Activated CD4-positive, alpha-beta T cell treated with anti-CD3 and anti-CD28 coated beads for 36 hours (primary cell): ENCODE measurements at regions of chr3 and their contacts with region 1.

Region 1: DNA sequence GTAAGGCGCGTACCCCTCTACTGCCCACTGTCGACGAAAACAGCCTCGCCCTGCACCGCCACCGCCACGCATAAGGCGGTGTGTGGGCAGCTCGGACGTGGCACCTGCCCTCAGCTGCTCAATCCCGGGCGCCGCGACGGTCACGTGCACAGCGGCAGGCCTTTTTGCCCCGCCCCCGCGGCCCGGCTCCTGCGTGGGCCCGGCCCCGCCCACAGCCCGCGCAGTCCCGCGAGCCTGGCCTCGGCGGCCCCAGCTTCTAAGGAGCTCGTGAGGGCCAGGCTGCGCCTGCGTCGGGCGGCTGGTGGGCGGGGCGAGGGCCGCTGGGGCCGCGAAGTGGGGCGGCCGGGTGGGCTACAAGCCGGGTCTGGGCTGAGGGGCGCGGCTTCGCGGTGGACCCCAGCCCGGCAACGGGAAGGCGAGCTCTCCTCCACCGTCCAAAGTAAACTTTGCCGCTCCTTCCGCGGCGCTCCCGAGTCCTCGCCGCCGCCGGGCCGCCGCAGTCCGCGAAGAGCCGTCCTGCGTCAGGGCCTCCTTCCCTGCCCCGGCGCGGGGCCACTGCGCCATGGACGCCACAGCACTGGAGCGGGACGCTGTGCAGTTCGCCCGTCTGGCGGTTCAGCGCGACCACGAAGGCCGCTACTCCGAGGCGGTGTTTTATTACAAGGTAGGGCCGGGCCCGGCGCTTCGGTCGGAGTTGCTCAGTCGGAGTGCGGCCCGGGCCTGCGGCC is at the start of gene CAPN7:
- DNase-seq: peak; percentile 94
- ATAC-seq: peak; percentile 86
- H3K4me3 Mint-ChIP-seq: peak within 1 kb of the TSS; percentile 85
- H3K27ac Mint-ChIP-seq: peak within 1 kb of the TSS; percentile 93
- H3K4me1 Mint-ChIP-seq: peaks cover 23% of the 10 kb centered on the region
- H3K27me3 Mint-ChIP-seq: no peaks in the 10 kb centered on the region
- total RNA-seq, gene CAPN7: 18.4 to 20.4 TPM

Region 2: GRCh38 chr3:14969671-14970070 is 236.4 kb before region 1 on chr3:
- CTCF ChIA-PET with region 1: no interaction called
- POLR2A ChIA-PET with region 1: no interaction called
- intact Hi-C with region 1: no loop called
- DNase-seq: no peak
- ATAC-seq: no peak
- H3K4me3 Mint-ChIP-seq: no peak overlapping the region
- H3K27ac Mint-ChIP-seq: no peak overlapping the region
- H3K4me1 Mint-ChIP-seq: peaks cover 3% of the 10 kb centered on the region
- H3K27me3 Mint-ChIP-seq: no peaks in the 10 kb centered on the region

Region 3: GRCh38 chr3:15064835-15065549 is 141.1 kb before region 1 on chr3 and contains the start of gene MRPS25:
- CTCF ChIA-PET with region 1: interaction called, 3 read pairs
- POLR2A ChIA-PET with region 1: interaction called, 4 read pairs
- intact Hi-C with region 1: loop called in 1 of 2 experiments (anchors 1 kb)
- DNase-seq: peak; percentile 95
- ATAC-seq: peak; percentile 98
- H3K4me3 Mint-ChIP-seq: peak within 1 kb of the TSS; percentile 96
- H3K27ac Mint-ChIP-seq: peak within 1 kb of the TSS; percentile 96
- H3K4me1 Mint-ChIP-seq: peaks cover 22% of the 10 kb centered on the region
- H3K27me3 Mint-ChIP-seq: no peaks in the 10 kb centered on the region
- total RNA-seq, gene MRPS25: 52.3 to 67.0 TPM

Region 4: GRCh38 chr3:15263120-15263519 is 57.0 kb after region 1 on chr3:
- CTCF ChIA-PET with region 1: interaction called, 19 read pairs
- POLR2A ChIA-PET with region 1: interaction called, 5 read pairs
- intact Hi-C with region 1: loop called in 1 of 2 experiments (anchors 1 kb)
- DNase-seq: no peak
- ATAC-seq: no peak
- H3K4me3 Mint-ChIP-seq: no peak overlapping the region
- H3K27ac Mint-ChIP-seq: peak overlapping the region; percentile 45
- H3K4me1 Mint-ChIP-seq: peaks cover 13% of the 10 kb centered on the region
- H3K27me3 Mint-ChIP-seq: no peaks in the 10 kb centered on the region

Region 5: DNA sequence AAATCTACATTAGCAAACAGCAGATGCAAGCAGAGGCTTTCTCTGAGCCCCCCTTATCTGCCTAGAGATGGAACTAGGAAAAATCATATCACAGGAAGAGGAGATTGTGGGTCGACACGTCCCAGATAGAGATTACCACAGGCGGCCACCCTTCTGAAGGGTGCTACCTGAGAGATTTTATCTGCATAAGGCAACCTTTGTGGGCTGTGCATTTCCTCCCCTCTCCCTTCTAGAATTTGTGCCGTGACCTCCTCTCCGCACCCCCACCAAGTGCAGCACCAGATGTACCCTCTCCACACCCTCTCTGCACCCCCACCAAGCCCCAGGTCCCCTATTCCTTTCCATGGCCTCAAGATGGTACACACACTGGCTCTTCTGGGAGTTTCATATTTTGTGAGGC is 193.9 kb after region 1 on chr3:
- CTCF ChIA-PET with region 1: interaction called, 54 read pairs
- POLR2A ChIA-PET with region 1: no interaction called
- intact Hi-C with region 1: loop called (anchors 1 to 2 kb)
- DNase-seq: no peak
- ATAC-seq: no peak
- H3K4me3 Mint-ChIP-seq: no peak overlapping the region
- H3K27ac Mint-ChIP-seq: no peak overlapping the region
- H3K4me1 Mint-ChIP-seq: peaks cover 14% of the 10 kb centered on the region
- H3K27me3 Mint-ChIP-seq: no peaks in the 10 kb centered on the region

Region 6: GRCh38 chr3:15557511-15557946 is 351.4 kb after region 1 on chr3:
- CTCF ChIA-PET with region 1: interaction called, 5 read pairs
- POLR2A ChIA-PET with region 1: no interaction called
- intact Hi-C with region 1: loop called (anchors 1 kb)
- DNase-seq: peak; percentile 75
- ATAC-seq: peak; percentile 87
- H3K4me3 Mint-ChIP-seq: no peak overlapping the region
- H3K27ac Mint-ChIP-seq: no peak overlapping the region
- H3K4me1 Mint-ChIP-seq: peaks cover 10% of the 10 kb centered on the region
- H3K27me3 Mint-ChIP-seq: no peaks in the 10 kb centered on the region

Region 7: DNA sequence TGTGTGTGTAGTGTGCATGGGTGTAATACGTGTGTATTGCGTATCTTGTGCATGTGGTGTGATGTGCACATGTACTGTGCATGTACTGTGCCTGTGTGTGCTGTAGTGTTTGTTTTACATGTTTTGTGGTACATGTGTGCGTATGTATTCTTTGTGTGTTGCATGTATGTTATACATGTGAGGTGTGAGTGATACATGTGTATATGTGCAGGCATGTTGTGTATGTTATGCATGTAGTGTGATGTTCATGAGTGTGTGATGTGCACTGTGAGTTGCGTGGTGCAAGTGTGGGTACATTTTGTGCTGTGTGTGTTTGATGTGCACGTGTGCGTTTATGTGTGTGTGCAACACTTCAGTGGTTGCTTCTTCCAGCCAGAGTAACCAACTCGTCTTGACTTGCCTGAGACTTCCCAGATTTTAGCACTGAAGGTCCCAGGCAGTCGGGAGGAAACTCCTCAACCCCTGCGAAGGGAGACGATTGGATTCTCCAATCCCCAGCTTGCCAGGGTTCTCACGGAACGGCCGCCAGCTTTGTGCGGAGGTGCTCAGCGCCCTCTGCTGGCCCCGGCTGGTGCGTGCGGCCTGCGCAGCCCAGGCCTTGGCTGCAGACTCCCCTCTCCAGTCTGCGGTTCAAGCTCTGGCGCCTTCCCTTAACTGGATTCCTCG is 972.0 kb after region 1 on chr3:
- CTCF ChIA-PET with region 1: no interaction called
- POLR2A ChIA-PET with region 1: no interaction called
- intact Hi-C with region 1: loop called in 1 of 2 experiments (anchors 5 kb)
- DNase-seq: peak; percentile 85
- ATAC-seq: peak; percentile 87
- H3K4me3 Mint-ChIP-seq: no peak overlapping the region
- H3K27ac Mint-ChIP-seq: no peak overlapping the region
- H3K4me1 Mint-ChIP-seq: no peaks in the 10 kb centered on the region
- H3K27me3 Mint-ChIP-seq: peaks cover 18% of the 10 kb centered on the region